A549 (cell line): ENCODE measurements at regions of chr3 and their contacts with region 1.

Region 1: DNA sequence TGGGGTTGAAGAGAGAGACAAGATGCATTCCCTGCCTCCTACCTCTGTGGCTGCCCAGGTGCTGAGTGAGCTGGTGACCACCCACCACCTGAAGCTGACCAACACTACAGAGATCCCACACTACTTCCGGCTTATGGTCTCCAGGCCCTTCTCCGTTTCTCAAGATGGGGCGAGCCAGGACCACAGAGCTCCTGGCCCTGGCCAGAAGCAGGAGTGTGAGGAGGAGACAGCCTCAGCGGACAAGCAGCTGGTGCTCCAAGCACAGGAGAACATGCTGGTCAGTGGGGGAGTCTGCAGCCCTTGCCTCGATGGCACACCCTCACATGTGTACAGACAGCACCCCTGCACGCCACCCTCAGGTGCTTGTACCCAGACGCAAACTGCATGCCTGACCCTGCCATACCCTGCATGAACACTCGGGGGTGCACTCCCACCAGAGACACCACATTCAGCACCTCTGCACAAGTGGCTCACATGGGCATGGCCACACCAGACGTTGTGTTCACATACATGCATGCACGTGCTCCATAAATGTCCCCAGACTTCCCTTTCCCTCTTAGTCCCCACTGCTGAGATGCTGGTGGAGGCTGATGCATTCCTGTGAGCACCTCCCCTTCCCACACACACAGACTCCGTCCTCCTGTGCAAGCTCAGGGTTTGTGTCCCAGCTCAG is 19.0 kb downstream of the ACAA1 start:
- DNase-seq: peak; percentile 59 to 66
- ATAC-seq: peak; percentile 68 to 84
- H3K4me3 ChIP-seq: no peak overlapping the region
- H3K27ac ChIP-seq: no peak overlapping the region
- H3K4me1 ChIP-seq: no peaks in the 10 kb centered on the region
- CTCF ChIP-seq: peak; percentile 50
- EP300 ChIP-seq: no peak
- POLR2A ChIP-seq: no peak
- RAD21 ChIP-seq: peak; percentile 52 to 80

Region 2: DNA sequence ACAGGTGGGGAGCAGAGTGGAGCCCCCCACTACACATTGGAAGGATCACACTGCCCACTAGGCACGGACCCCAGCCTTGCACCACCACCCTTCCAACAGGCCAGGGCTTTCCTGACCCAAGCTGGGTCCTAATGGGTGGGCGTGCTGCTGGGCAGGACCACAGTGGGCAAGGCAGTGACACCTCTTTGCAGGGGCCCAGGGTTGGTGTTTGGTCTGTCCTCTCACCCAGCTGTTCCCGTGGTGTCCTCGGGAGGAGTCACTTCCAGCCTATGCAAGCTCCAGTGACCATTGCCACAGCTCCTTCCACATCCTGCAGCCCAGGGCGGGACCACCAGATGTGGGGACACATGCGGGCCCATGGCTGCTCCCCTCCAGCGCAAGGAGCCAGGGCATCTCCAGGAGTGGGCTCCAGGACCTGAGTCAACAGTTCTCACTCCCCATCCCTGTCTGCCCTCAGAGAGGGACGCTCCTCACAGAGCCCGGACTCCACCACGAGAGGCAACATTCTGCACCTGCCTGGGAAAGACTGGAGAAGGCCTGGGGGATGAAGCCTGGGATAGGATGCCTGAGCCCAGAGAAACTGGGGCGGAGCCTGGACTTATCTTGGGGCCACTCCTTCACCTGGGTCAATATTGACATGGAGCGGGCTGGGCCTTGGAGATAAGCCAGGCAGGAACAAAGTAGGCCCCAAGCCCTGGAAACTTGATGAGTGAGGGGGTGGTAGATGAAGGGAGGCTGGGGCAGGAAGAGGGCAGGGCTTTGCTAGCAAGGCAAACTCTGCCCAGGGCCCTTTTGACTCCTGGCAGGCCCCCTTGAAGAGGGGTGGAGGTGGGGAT is 131.2 kb before region 1 on chr3:
- CTCF ChIA-PET with region 1: no interaction called
- POLR2A ChIA-PET with region 1: no interaction called
- DNase-seq: peak in 1 of 2 experiments; percentile 65
- ATAC-seq: peak in 1 of 2 experiments; percentile 61; a peak in 3 of 6 replicates
- H3K4me3 ChIP-seq: no peak overlapping the region
- H3K27ac ChIP-seq: peak overlapping the region; percentile 53 to 64; a peak in 5 of 6 replicates
- H3K4me1 ChIP-seq: peaks cover 14% of the 10 kb centered on the region
- CTCF ChIP-seq: no peak
- EP300 ChIP-seq: no peak
- POLR2A ChIP-seq: no peak
- RAD21 ChIP-seq: no peak

Region 3: GRCh38 chr3:38038447-38038911 is 79.4 kb before region 1 on chr3:
- CTCF ChIA-PET with region 1: no interaction called
- POLR2A ChIA-PET with region 1: no interaction called
- DNase-seq: no peak
- ATAC-seq: no peak
- H3K4me3 ChIP-seq: no peak overlapping the region
- H3K27ac ChIP-seq: no peak overlapping the region
- H3K4me1 ChIP-seq: no peaks in the 10 kb centered on the region
- CTCF ChIP-seq: no peak
- EP300 ChIP-seq: no peak
- POLR2A ChIP-seq: no peak
- RAD21 ChIP-seq: no peak

Region 4: GRCh38 chr3:38131621-38132369 is 13.9 kb after region 1 on chr3:
- CTCF ChIA-PET with region 1: interaction called, 15 read pairs
- POLR2A ChIA-PET with region 1: interaction called, 12 read pairs
- DNase-seq: peak; percentile 44 to 53
- ATAC-seq: peak; percentile 54 to 86; a peak in 3 of 6 replicates
- H3K4me3 ChIP-seq: no peak overlapping the region
- H3K27ac ChIP-seq: no peak overlapping the region
- H3K4me1 ChIP-seq: peaks cover 20% of the 10 kb centered on the region
- CTCF ChIP-seq: peak; percentile 56
- EP300 ChIP-seq: no peak
- POLR2A ChIP-seq: no peak
- RAD21 ChIP-seq: peak; percentile 56 to 68

Region 5: GRCh38 chr3:38136777-38137614 is 19.1 kb after region 1 on chr3 and contains the start of gene ACAA1:
- CTCF ChIA-PET with region 1: interaction called, 15 read pairs
- POLR2A ChIA-PET with region 1: interaction called, 12 read pairs
- DNase-seq: peak; percentile 97 to 99
- ATAC-seq: peak; percentile 87 to 96
- H3K4me3 ChIP-seq: peak within 1 kb of the TSS; percentile 81
- H3K27ac ChIP-seq: peak within 1 kb of the TSS; percentile 88 to 92
- H3K4me1 ChIP-seq: peaks cover 36% of the 10 kb centered on the region
- CTCF ChIP-seq: no peak
- EP300 ChIP-seq: no peak
- POLR2A ChIP-seq: peak; percentile 90
- RAD21 ChIP-seq: no peak
- polyA plus RNA-seq, gene ACAA1: 34.8 and 36.8 TPM in 2 replicates

Region 6: DNA sequence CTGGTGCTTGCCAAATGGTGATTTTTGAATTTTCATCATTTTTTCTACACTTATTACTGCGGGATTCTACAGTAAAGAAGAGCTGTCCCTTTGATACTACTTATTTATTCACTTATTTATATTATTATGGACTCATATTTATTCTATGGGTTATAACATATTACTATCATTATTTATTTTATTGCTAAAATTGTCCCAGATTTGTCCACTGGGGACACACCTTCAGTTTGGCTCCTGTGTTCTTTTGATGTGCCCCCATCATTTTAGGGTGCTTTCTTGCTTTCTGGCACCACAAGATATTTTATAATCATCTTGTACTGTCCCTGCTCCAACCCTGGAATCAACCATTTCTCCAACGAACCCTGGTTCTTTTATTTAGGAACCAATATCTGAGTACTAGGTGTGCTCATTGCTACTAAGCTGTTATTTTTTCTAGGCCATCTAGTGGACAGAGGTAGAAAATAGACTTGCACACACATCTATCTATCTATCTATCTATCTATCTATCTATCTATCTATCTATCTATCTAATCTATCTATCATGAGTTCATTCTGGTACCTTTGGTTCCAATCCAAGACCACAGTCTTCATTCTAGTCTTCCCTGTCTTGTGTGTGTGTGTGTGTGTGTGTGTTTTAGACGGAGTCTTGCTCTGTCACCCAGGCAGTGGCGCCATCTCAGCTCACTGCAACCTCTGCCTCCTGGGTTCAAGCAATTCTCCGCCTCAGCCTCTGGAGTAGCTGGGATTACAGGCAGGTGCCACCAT is 180.2 kb after region 1 on chr3:
- CTCF ChIA-PET with region 1: interaction called, 10 read pairs
- POLR2A ChIA-PET with region 1: no interaction called
- DNase-seq: peak; percentile 24 to 28
- ATAC-seq: peak; percentile 84 to 97
- H3K4me3 ChIP-seq: no peak overlapping the region
- H3K27ac ChIP-seq: no peak overlapping the region
- H3K4me1 ChIP-seq: no peaks in the 10 kb centered on the region
- CTCF ChIP-seq: peak; percentile 63
- EP300 ChIP-seq: no peak
- POLR2A ChIP-seq: no peak
- RAD21 ChIP-seq: peak in 1 of 2 experiments; percentile 20; a peak in 2 of 5 replicates

Region 7: GRCh38 chr3:38521391-38521987 is 403.6 kb after region 1 on chr3:
- CTCF ChIA-PET with region 1: no interaction called
- POLR2A ChIA-PET with region 1: no interaction called
- DNase-seq: peak; percentile 47 to 73
- ATAC-seq: peak; percentile 63 to 82; a peak in 5 of 6 replicates
- H3K4me3 ChIP-seq: no peak overlapping the region
- H3K27ac ChIP-seq: no peak overlapping the region
- H3K4me1 ChIP-seq: no peaks in the 10 kb centered on the region; the same call in 2 of the 3 replicates
- CTCF ChIP-seq: peak; percentile 94
- EP300 ChIP-seq: no peak
- POLR2A ChIP-seq: no peak
- RAD21 ChIP-seq: peak; percentile 69 to 78